MCF 10A (cell line): ENCODE measurements at regions of chr7 and their contacts with region 1.

Region 1: GRCh38 chr7:8295638-8296361 is 33.8 kb upstream of the ICA1 start:
- DNase-seq: peak; percentile 85
- H3K4me3 Mint-ChIP-seq: no peak overlapping the region
- H3K27ac Mint-ChIP-seq: no peak overlapping the region
- H3K4me1 Mint-ChIP-seq: peaks cover 7% of the 10 kb centered on the region
- H3K27me3 Mint-ChIP-seq: no peaks in the 10 kb centered on the region
- CTCF ChIP-seq: peak; percentile 65

Region 2: GRCh38 chr7:7542251-7542835 is 753.5 kb before region 1 on chr7:
- CTCF ChIA-PET with region 1: no interaction called
- POLR2A ChIA-PET with region 1: no interaction called
- intact Hi-C with region 1: loop called (anchors 2 kb)
- DNase-seq: no peak
- H3K4me3 Mint-ChIP-seq: no peak overlapping the region
- H3K27ac Mint-ChIP-seq: peak overlapping the region; percentile 62
- H3K4me1 Mint-ChIP-seq: peaks cover 18% of the 10 kb centered on the region
- H3K27me3 Mint-ChIP-seq: no peaks in the 10 kb centered on the region
- CTCF ChIP-seq: no peak

Region 3: GRCh38 chr7:7761340-7761980 is 534.3 kb before region 1 on chr7:
- CTCF ChIA-PET with region 1: interaction called, 6 read pairs
- POLR2A ChIA-PET with region 1: interaction called, 4 read pairs
- intact Hi-C with region 1: loop called (anchors 1 kb)
- DNase-seq: peak; percentile 64
- H3K4me3 Mint-ChIP-seq: peak overlapping the region; percentile 87
- H3K27ac Mint-ChIP-seq: peak overlapping the region; percentile 95
- H3K4me1 Mint-ChIP-seq: peaks cover 33% of the 10 kb centered on the region
- H3K27me3 Mint-ChIP-seq: no peaks in the 10 kb centered on the region
- CTCF ChIP-seq: peak; percentile 30

Region 4: GRCh38 chr7:8217200-8218068 is 78.4 kb before region 1 on chr7:
- CTCF ChIA-PET with region 1: interaction called, 21 read pairs
- POLR2A ChIA-PET with region 1: no interaction called
- intact Hi-C with region 1: loop called (anchors 1 kb)
- DNase-seq: peak; percentile 64
- H3K4me3 Mint-ChIP-seq: no peak overlapping the region
- H3K27ac Mint-ChIP-seq: no peak overlapping the region
- H3K4me1 Mint-ChIP-seq: peaks cover 5% of the 10 kb centered on the region
- H3K27me3 Mint-ChIP-seq: no peaks in the 10 kb centered on the region
- CTCF ChIP-seq: peak; percentile 65

Region 5: GRCh38 chr7:8261711-8262695 is 33.8 kb before region 1 on chr7 and contains the start of gene ICA1:
- CTCF ChIA-PET with region 1: interaction called, 19 read pairs
- POLR2A ChIA-PET with region 1: no interaction called
- intact Hi-C with region 1: no loop called
- DNase-seq: peak; percentile 66
- H3K4me3 Mint-ChIP-seq: peak within 1 kb of the TSS; percentile 82
- H3K27ac Mint-ChIP-seq: no peak within 1 kb of the TSS
- H3K4me1 Mint-ChIP-seq: no peaks in the 10 kb centered on the region
- H3K27me3 Mint-ChIP-seq: no peaks in the 10 kb centered on the region
- CTCF ChIP-seq: no peak
- total RNA-seq, gene ICA1: 26.3 and 31.5 TPM in 2 replicates

Region 6: GRCh38 chr7:8284606-8285005 is 11.2 kb before region 1 on chr7:
- CTCF ChIA-PET with region 1: interaction called, 24 read pairs
- POLR2A ChIA-PET with region 1: interaction called, 3 read pairs
- intact Hi-C with region 1: no loop called
- DNase-seq: peak; percentile 41
- H3K4me3 Mint-ChIP-seq: no peak overlapping the region
- H3K27ac Mint-ChIP-seq: no peak overlapping the region
- H3K4me1 Mint-ChIP-seq: no peaks in the 10 kb centered on the region
- H3K27me3 Mint-ChIP-seq: no peaks in the 10 kb centered on the region
- CTCF ChIP-seq: no peak

Region 7: DNA sequence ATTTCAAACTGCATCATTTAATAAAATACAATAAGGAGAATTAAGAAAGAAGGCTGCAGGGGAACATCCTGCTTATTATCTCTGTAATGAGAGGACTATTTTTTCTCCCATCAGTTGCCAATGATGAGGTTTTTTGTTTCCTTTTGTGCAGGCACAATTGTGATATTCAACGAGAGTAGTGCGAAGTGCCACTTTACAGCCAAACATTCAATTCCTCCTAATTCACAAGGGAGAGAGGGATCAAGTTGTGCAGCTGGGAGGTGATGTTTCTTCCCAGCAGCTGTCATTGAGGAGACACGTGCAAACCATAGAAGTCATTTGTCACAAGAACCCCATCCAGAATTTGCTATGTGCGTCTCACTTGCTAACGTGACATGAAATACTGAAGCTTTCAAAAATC is 47.8 kb after region 1 on chr7:
- CTCF ChIA-PET with region 1: no interaction called
- POLR2A ChIA-PET with region 1: no interaction called
- intact Hi-C with region 1: no loop called
- DNase-seq: no peak
- H3K4me3 Mint-ChIP-seq: no peak overlapping the region
- H3K27ac Mint-ChIP-seq: no peak overlapping the region
- H3K4me1 Mint-ChIP-seq: no peaks in the 10 kb centered on the region
- H3K27me3 Mint-ChIP-seq: peaks cover 15% of the 10 kb centered on the region
- CTCF ChIP-seq: no peak